Thyroid gland (tissue), 4 donors: ENCODE measurements at regions of chr1 and their contacts with region 1.

Region 1: GRCh38 chr1:158124999-158125398 is 55.7 kb upstream of the CD1D start:
- DNase-seq: peak; percentile 89 to 90
- H3K4me3 ChIP-seq: no peak overlapping the region
- H3K27ac ChIP-seq: peak overlapping the region in 2 of 3 donors; percentile 88 to 90
- H3K4me1 ChIP-seq: peaks cover 14 to 22% of the 10 kb centered on the region in 2 donors
- H3K27me3 ChIP-seq: no peaks in the 10 kb centered on the region
- CTCF ChIP-seq: peak; percentile 76 to 98 (median 96)
- POLR2A ChIP-seq: no peak

Region 2: DNA sequence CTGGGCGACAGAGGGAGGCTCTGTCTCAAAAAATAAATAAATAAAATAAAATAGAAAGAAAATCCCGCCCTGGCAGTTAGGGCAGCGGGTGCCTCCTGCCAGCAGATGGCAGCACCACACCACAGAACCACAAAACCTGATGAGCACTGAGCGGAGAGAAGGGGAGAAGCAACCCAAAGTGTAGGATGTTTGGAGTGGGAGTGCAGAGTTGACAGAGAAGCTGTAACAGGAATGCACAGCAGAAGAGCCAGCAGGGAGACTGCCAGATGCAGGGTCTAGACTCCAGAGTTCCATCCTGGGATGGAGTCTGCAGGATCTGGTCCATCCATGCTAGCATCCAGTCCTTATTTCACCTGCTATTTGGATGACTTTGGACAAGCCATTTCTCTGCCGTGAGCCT is 161.3 kb before region 1 on chr1:
- intact Hi-C with region 1: loop called (anchors 2 kb)
- DNase-seq: peak; percentile 60 to 71
- H3K4me3 ChIP-seq: no peak overlapping the region
- H3K27ac ChIP-seq: no peak overlapping the region
- H3K4me1 ChIP-seq: peaks cover 0 to 2% of the 10 kb centered on the region in 2 donors
- H3K27me3 ChIP-seq: no peaks in the 10 kb centered on the region
- CTCF ChIP-seq: peak; percentile 81 to 96 (median 88)
- POLR2A ChIP-seq: no peak

Region 3: GRCh38 chr1:158283965-158284364 is 159.0 kb after region 1 on chr1:
- intact Hi-C with region 1: no loop called
- DNase-seq: no peak
- H3K4me3 ChIP-seq: no peak overlapping the region
- H3K27ac ChIP-seq: no peak overlapping the region
- H3K4me1 ChIP-seq: no peaks in the 10 kb centered on the region
- H3K27me3 ChIP-seq: no peaks in the 10 kb centered on the region
- CTCF ChIP-seq: no peak
- POLR2A ChIP-seq: no peak